GM12878 (cell line): ENCODE measurements at regions of chr10 and their contacts with region 1.

Region 1: DNA sequence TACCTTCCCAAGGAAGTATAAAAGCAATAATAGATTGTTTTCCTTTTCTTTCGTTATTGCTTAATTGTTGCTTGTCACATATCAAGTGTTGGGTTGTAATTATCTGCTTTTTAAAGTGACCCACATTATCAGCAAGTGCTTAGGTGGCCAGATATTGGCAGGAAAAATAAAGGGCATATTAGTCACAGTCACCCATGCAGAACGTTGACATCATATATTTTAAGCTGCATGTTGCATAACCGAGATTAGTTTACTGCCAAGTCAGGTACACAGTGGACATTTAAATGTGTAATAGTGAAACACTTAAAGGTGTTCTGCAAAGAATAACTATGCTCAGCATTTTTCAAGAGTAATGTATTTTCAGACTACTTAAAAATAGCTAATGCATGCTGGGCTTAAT is 11.4 kb downstream of the NEBL start:
- DNase-seq: no peak
- ATAC-seq: peak; percentile 55
- H3K4me3 ChIP-seq: no peak overlapping the region
- H3K27ac ChIP-seq: no peak overlapping the region
- H3K4me1 ChIP-seq: no peaks in the 10 kb centered on the region
- H3K27me3 ChIP-seq: no peaks in the 10 kb centered on the region; a peak in 2 of 4 replicates
- CTCF ChIP-seq: no peak
- EP300 ChIP-seq: no peak
- POLR2A ChIP-seq: no peak
- RAD21 ChIP-seq: no peak

Region 2: DNA sequence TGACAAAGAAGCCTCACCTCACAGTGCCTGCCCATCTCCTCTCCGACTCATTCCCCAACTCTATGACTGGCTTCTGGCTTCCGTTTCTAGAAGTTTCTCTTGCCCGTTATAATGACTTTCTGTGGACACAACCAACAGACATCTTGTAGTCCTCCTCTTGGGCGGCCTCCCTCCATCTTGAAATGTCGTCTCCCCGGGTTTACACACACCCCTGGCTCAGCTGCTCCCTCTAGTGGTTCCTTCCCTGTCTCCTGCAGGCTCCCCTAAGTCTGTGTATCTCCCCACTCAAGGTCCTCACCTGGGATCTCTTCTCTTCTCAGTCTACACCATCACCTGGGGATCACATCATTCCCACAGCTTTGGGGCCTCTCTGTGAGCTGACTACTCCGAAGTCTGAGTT is 134.9 kb after region 1 on chr10:
- CTCF ChIA-PET with region 1: interaction called, 3 read pairs
- POLR2A ChIA-PET with region 1: no interaction called
- RAD21 ChIA-PET with region 1: no interaction called
- SMC1A ChIA-PET with region 1: no interaction called
- in situ Hi-C with region 1: no loop called
- intact Hi-C with region 1: loop called (anchors 5 kb)
- DNase-seq: peak; percentile 21
- ATAC-seq: peak; percentile 99
- H3K4me3 ChIP-seq: no peak overlapping the region
- H3K27ac ChIP-seq: no peak overlapping the region
- H3K4me1 ChIP-seq: no peaks in the 10 kb centered on the region
- H3K27me3 ChIP-seq: no peaks in the 10 kb centered on the region
- CTCF ChIP-seq: peak; percentile 52 to 79 (median 75)
- EP300 ChIP-seq: no peak
- POLR2A ChIP-seq: no peak
- RAD21 ChIP-seq: peak; percentile 69

Region 3: GRCh38 chr10:21242915-21243314 is 357.2 kb after region 1 on chr10:
- CTCF ChIA-PET with region 1: no interaction called
- POLR2A ChIA-PET with region 1: no interaction called
- RAD21 ChIA-PET with region 1: no interaction called
- SMC1A ChIA-PET with region 1: no interaction called
- in situ Hi-C with region 1: no loop called
- intact Hi-C with region 1: loop called (anchors 10 kb)
- DNase-seq: no peak
- ATAC-seq: no peak
- H3K4me3 ChIP-seq: no peak overlapping the region
- H3K27ac ChIP-seq: no peak overlapping the region
- H3K4me1 ChIP-seq: no peaks in the 10 kb centered on the region
- H3K27me3 ChIP-seq: no peaks in the 10 kb centered on the region
- CTCF ChIP-seq: no peak
- EP300 ChIP-seq: no peak
- POLR2A ChIP-seq: no peak
- RAD21 ChIP-seq: no peak